AG04449 (cell line): ENCODE measurements at regions of chr1 and their contacts with region 1.

Region 1: GRCh38 chr1:25997828-25998761 is at the start of gene PAFAH2:
- DNase-seq: peak; percentile 95
- H3K4me3 ChIP-seq: peak within 1 kb of the TSS; percentile 67
- CTCF ChIP-seq: peak; percentile 98

Region 2: GRCh38 chr1:25874934-25875855 is 122.9 kb before region 1 on chr1 and contains the start of gene PAQR7:
- CTCF ChIA-PET with region 1: interaction called, 17 read pairs
- POLR2A ChIA-PET with region 1: no interaction called
- DNase-seq: no peak
- H3K4me3 ChIP-seq: peak within 1 kb of the TSS; percentile 74
- CTCF ChIP-seq: peak; percentile 42

Region 3: GRCh38 chr1:26009796-26010460 is 11.8 kb after region 1 on chr1:
- CTCF ChIA-PET with region 1: interaction called, 24 read pairs
- POLR2A ChIA-PET with region 1: no interaction called
- DNase-seq: no peak
- H3K4me3 ChIP-seq: no peak overlapping the region
- CTCF ChIP-seq: peak; percentile 11

Region 4: DNA sequence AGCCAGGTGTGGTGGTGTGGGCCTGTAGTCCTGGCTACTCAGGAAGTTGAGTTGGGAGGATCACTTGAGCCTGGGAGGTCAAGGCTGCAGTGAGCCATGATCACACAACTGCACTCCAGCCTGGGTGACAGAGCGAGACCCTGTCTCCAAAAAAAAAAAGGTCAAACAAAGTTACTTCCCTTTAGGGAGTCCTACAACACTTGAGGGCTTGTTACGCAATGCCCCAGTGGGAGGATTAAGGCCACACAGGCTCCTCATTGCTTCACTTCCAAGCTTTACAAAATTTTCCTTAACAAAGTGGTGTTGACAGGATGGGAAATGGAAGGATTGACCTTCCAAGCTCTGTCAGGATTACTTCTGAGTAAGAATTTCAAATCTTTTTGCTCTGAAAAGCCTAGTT is 17.3 kb after region 1 on chr1:
- CTCF ChIA-PET with region 1: interaction called, 24 read pairs
- POLR2A ChIA-PET with region 1: no interaction called
- DNase-seq: no peak
- H3K4me3 ChIP-seq: no peak overlapping the region
- CTCF ChIP-seq: no peak

Region 5: GRCh38 chr1:26203642-26204318 is 205.7 kb after region 1 on chr1:
- CTCF ChIA-PET with region 1: no interaction called
- POLR2A ChIA-PET with region 1: no interaction called
- DNase-seq: no peak
- H3K4me3 ChIP-seq: no peak overlapping the region
- CTCF ChIP-seq: no peak